CD4-positive, alpha-beta T cell (primary cell): ENCODE measurements at regions of chr22 and their contacts with region 1.

Region 1: DNA sequence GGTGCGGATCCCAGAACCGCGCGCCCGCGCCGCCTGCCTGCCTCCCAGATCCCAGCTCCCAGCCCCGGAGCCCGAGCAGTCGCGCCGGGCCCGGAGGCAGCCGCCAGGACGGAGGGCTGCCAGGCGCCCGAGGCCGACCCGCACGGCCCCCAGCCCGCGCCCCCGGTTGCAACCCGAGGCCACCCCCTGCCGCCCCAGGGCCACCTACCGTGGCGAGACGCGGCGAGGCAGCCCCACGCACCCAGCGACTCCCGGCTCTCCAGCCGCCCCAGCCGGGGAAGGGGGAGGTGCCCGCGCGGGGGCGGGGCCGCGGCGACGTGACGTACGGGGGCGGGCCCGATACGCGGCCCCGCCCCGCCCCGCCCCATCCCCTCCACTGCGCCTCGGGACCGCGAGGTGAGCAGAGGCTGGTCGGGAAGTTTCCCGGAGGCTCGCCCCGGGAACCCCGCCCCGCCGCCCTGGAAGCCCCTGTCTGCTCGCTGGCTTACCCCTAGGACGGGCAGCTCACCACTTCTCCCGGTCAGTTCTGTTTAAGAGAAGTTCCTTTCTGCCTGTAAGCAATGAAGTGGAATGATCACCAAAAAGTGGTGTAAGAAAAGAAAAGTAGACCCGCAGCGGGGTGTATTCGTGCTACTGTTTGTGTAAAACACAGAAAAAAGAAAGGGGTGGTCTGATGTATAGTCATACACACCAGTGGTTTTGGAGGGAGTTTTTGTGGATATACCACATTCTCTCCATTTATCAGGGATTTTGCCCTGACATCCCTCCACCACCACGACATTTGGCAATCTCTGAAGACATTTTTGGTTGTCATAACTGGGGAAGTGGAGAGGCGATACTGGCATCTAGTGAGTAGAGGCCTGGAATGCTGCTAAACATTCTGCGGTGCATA is at the start of gene TPST2:
- DNase-seq: peak; percentile 58 to 93 (median 74)
- ATAC-seq: peak; percentile 83
- H3K4me3 ChIP-seq: peak within 1 kb of the TSS; percentile 79
- H3K4me3 Mint-ChIP-seq: peak within 1 kb of the TSS; percentile 93
- H3K27ac ChIP-seq: peak within 1 kb of the TSS; percentile 37 to 59
- H3K27ac Mint-ChIP-seq: peak within 1 kb of the TSS; percentile 89
- H3K4me1 ChIP-seq: peaks cover 73% of the 10 kb centered on the region
- H3K4me1 Mint-ChIP-seq: peaks cover 66% of the 10 kb centered on the region
- H3K27me3 ChIP-seq: no peaks in the 10 kb centered on the region
- H3K27me3 Mint-ChIP-seq: no peaks in the 10 kb centered on the region
- CTCF ChIP-seq: no peak
- total RNA-seq, gene TPST2: 7.2 to 7.4 TPM

Region 2: GRCh38 chr22:26428515-26429457 is 161.3 kb before region 1 on chr22 and contains the start of gene ASPHD2:
- CTCF ChIA-PET with region 1: no interaction called
- POLR2A ChIA-PET with region 1: no interaction called
- intact Hi-C with region 1: loop called in 1 of 2 experiments (anchors 2 kb)
- DNase-seq: peak; percentile 61 to 92 (median 77)
- ATAC-seq: peak; percentile 85
- H3K4me3 ChIP-seq: peak within 1 kb of the TSS; percentile 87
- H3K4me3 Mint-ChIP-seq: peak within 1 kb of the TSS; percentile 98
- H3K27ac ChIP-seq: peak within 1 kb of the TSS; percentile 96 to 97
- H3K27ac Mint-ChIP-seq: peak within 1 kb of the TSS; percentile 94
- H3K4me1 ChIP-seq: peaks cover 30% of the 10 kb centered on the region
- H3K4me1 Mint-ChIP-seq: peaks cover 31% of the 10 kb centered on the region
- H3K27me3 ChIP-seq: no peaks in the 10 kb centered on the region
- H3K27me3 Mint-ChIP-seq: no peaks in the 10 kb centered on the region
- CTCF ChIP-seq: no peak
- total RNA-seq, gene ASPHD2: 0.70 to 0.85 TPM

Region 3: GRCh38 chr22:26511857-26512793 is 78.0 kb before region 1 on chr22 and contains the start of gene TFIP11:
- CTCF ChIA-PET with region 1: no interaction called
- POLR2A ChIA-PET with region 1: interaction called, 3 read pairs
- intact Hi-C with region 1: loop called in 1 of 2 experiments (anchors 1 kb)
- DNase-seq: peak; percentile 80 to 94 (median 88)
- ATAC-seq: peak; percentile 89
- H3K4me3 ChIP-seq: peak within 1 kb of the TSS; percentile 99
- H3K4me3 Mint-ChIP-seq: peak within 1 kb of the TSS; percentile 98
- H3K27ac ChIP-seq: peak within 1 kb of the TSS; percentile 71 to 91
- H3K27ac Mint-ChIP-seq: peak within 1 kb of the TSS; percentile 95
- H3K4me1 ChIP-seq: peaks cover 22% of the 10 kb centered on the region
- H3K4me1 Mint-ChIP-seq: peaks cover 46% of the 10 kb centered on the region
- H3K27me3 ChIP-seq: no peaks in the 10 kb centered on the region
- H3K27me3 Mint-ChIP-seq: no peaks in the 10 kb centered on the region
- CTCF ChIP-seq: no peak
- total RNA-seq, gene TFIP11: 111 TPM

Region 4: DNA sequence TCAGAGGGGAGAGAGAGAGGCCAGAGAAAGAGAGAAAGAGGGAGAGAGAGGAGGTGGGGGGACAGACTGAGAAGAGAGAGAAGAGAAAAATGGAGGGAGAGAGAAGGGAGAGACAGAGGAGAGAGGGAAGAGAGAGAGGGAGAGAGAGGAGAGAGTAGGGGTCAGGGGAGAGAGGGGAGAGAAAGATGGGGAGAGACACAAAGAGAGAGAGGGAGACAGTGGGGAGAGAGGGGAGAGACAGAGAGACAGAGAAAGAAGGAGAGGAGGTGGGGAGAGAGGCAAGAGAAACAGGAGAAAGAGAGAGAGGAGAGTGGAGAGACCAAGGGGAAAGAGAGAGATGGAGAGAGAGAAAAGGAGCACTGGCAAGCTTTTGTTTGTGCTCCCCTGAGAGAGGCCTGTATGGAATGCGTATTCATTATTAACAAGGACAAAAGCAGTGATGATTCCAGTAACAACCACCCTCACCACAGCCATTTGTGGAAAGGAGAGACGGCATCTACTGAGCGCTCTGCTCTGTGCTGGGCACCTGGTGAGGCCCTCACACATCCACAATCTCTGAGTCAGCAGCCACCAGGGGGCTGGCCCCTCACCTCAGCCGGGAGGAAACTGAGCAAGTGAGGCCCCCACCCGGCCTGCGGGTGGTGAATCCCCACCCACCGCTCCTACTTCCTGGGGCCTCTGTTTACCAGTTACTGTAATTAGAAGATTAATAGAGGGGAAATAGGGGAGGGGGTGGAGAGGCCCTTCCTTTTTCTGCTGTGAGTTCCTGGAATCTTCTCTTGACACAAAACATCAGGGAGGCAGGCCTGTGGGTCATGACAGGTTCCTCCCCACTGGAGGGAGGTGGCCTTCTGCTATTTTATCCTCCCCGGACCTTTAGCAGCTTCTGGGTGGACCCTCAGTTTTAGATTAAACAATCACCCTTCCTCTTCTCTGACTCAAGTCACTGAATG is 52.6 kb after region 1 on chr22:
- CTCF ChIA-PET with region 1: no interaction called
- POLR2A ChIA-PET with region 1: interaction called, 3 read pairs
- intact Hi-C with region 1: loop called in 1 of 2 experiments (anchors 2 kb)
- DNase-seq: peak in 13 of 14 experiments; percentile 25 to 90 (median 69)
- ATAC-seq: peak; percentile 51
- H3K4me3 ChIP-seq: peak overlapping the region; percentile 10
- H3K4me3 Mint-ChIP-seq: no peak overlapping the region
- H3K27ac ChIP-seq: peak overlapping the region; percentile 45 to 77
- H3K27ac Mint-ChIP-seq: peak overlapping the region; percentile 76
- H3K4me1 ChIP-seq: peaks cover 62% of the 10 kb centered on the region
- H3K4me1 Mint-ChIP-seq: peaks cover 56% of the 10 kb centered on the region
- H3K27me3 ChIP-seq: no peaks in the 10 kb centered on the region
- H3K27me3 Mint-ChIP-seq: no peaks in the 10 kb centered on the region
- CTCF ChIP-seq: peak; percentile 58

Region 5: GRCh38 chr22:26711205-26711963 is 121.3 kb after region 1 on chr22:
- CTCF ChIA-PET with region 1: no interaction called
- POLR2A ChIA-PET with region 1: no interaction called
- intact Hi-C with region 1: no loop called
- DNase-seq: peak in 1 of 14 experiments; percentile 35
- ATAC-seq: no peak
- H3K4me3 ChIP-seq: no peak overlapping the region
- H3K4me3 Mint-ChIP-seq: no peak overlapping the region
- H3K27ac ChIP-seq: no peak overlapping the region
- H3K27ac Mint-ChIP-seq: no peak overlapping the region
- H3K4me1 ChIP-seq: peaks cover 2% of the 10 kb centered on the region
- H3K4me1 Mint-ChIP-seq: peaks cover 36% of the 10 kb centered on the region
- H3K27me3 ChIP-seq: no peaks in the 10 kb centered on the region
- H3K27me3 Mint-ChIP-seq: no peaks in the 10 kb centered on the region
- CTCF ChIP-seq: no peak